ENCODE measurements at regions of chr5 and their contacts with region 1.

Region 1: DNA sequence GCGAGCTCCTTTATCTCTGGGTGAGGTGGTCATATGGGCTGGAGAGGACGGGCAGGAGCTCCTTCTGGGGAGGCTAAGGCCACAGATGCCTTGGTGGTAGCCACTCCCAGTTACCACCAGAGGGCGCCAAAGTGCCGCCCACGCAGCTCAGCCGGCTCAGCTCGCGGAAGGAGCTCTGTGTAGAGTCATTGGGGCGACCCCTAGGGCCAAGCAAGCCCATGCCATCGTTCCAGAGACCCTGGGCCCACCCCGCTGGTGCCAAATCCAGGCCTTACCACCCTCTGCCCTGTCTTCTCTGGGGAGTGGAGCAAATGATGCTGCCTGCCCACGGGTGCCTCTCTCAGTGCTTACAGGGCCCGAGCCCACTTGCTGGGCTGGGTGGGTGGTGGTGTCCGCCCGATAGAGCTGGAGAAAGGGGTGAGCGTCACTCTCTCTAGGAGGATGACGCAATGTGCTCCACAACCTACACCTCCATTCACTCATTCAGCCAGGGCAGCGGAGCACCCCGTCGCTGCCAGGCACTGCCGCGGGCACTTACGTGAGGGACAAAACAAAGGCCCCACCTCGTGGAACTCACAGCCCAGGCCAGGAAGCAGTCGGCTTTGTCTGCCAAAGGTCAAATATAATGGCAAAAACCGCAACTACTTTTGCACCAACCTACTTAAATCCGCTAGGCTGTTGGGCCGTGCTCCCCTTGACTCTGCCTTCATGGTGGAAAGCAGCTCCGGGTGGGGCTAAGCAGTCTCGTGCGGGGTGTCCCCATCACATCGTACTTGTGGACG is 13.8 kb downstream of the TSPAN17 start:
- DNase-seq: peak; percentile 89
- ATAC-seq: peak; percentile 83
- H3K4me3 Mint-ChIP-seq: no peak overlapping the region
- H3K27ac Mint-ChIP-seq: no peak overlapping the region
- H3K4me1 Mint-ChIP-seq: peaks cover 11% of the 10 kb centered on the region
- H3K27me3 Mint-ChIP-seq: no peaks in the 10 kb centered on the region
- CTCF ChIP-seq: peak; percentile 98

Region 2: GRCh38 chr5:176429972-176430371 is 231.1 kb before region 1 on chr5:
- CTCF ChIA-PET with region 1: no interaction called
- POLR2A ChIA-PET with region 1: no interaction called
- DNase-seq: no peak
- ATAC-seq: no peak
- H3K4me3 Mint-ChIP-seq: no peak overlapping the region
- H3K27ac Mint-ChIP-seq: no peak overlapping the region
- H3K4me1 Mint-ChIP-seq: no peaks in the 10 kb centered on the region
- H3K27me3 Mint-ChIP-seq: peaks cover 19% of the 10 kb centered on the region
- CTCF ChIP-seq: no peak

Region 3: GRCh38 chr5:176466245-176466871 is 194.7 kb before region 1 on chr5:
- CTCF ChIA-PET with region 1: no interaction called
- POLR2A ChIA-PET with region 1: no interaction called
- DNase-seq: no peak
- ATAC-seq: no peak
- H3K4me3 Mint-ChIP-seq: no peak overlapping the region
- H3K27ac Mint-ChIP-seq: no peak overlapping the region; the same call in 1 of the 2 replicates
- H3K4me1 Mint-ChIP-seq: peaks cover 2% of the 10 kb centered on the region; the same call in 1 of the 2 replicates
- H3K27me3 Mint-ChIP-seq: no peaks in the 10 kb centered on the region
- CTCF ChIP-seq: no peak

Region 4: GRCh38 chr5:176647030-176647866 is 13.8 kb before region 1 on chr5 and contains the start of gene TSPAN17:
- CTCF ChIA-PET with region 1: interaction called, 112 read pairs
- POLR2A ChIA-PET with region 1: interaction called, 5 read pairs
- DNase-seq: peak; percentile 100
- ATAC-seq: peak; percentile 93
- H3K4me3 Mint-ChIP-seq: peak within 1 kb of the TSS; percentile 81
- H3K27ac Mint-ChIP-seq: peak within 1 kb of the TSS; percentile 90
- H3K4me1 Mint-ChIP-seq: peaks cover 45% of the 10 kb centered on the region
- H3K27me3 Mint-ChIP-seq: no peaks in the 10 kb centered on the region
- CTCF ChIP-seq: no peak
- total RNA-seq, gene TSPAN17: 45.7 to 47.8 TPM (median 46.1 TPM) in 3 replicates

Region 5: GRCh38 chr5:176733406-176734262 is 72.6 kb after region 1 on chr5:
- CTCF ChIA-PET with region 1: interaction called, 54 read pairs
- POLR2A ChIA-PET with region 1: no interaction called
- DNase-seq: peak; percentile 10
- ATAC-seq: no peak
- H3K4me3 Mint-ChIP-seq: no peak overlapping the region
- H3K27ac Mint-ChIP-seq: no peak overlapping the region
- H3K4me1 Mint-ChIP-seq: peaks cover 23% of the 10 kb centered on the region
- H3K27me3 Mint-ChIP-seq: peaks cover 11% of the 10 kb centered on the region
- CTCF ChIP-seq: no peak

Region 6: DNA sequence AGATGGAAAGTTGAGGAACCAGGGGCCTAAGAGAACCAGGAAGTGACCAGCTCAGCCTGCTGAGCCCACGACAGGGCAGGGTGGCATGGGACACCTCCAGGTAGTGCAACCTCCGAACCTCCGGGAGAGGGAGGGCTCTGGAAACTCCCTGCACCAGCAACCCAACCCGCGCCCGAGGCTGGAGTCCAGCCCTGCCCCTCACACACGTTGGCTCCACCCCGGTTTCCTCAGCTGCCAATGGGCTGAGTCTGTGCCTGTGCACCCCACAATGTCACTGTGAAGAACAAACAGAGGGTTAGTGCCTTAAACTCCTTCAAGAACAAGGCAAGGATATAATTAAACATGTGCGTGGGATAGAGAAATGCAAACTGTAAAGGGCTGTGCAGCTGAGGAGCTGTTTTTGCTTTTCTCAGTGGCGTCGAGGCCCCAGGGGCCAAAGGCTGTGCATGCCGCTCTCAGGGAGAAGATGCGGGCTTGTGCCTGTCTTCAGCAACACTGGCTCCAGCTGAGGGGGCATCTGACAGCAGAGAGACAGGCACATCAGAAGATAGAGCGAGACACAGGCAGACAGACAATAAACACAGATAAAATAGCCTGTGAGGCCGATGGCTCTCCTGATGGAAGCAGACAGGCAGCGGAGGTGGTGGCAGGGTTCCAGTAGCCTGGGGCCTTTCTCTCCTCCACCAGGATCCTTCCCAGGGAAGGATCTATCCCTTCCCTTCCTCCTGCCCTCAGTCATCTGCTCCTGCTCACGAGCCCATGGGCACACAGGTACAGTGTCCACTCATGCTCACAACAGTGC is 132.5 kb after region 1 on chr5:
- CTCF ChIA-PET with region 1: interaction called, 22 read pairs
- POLR2A ChIA-PET with region 1: no interaction called
- DNase-seq: peak; percentile 50
- ATAC-seq: peak; percentile 93
- H3K4me3 Mint-ChIP-seq: no peak overlapping the region
- H3K27ac Mint-ChIP-seq: no peak overlapping the region
- H3K4me1 Mint-ChIP-seq: peaks cover 26% of the 10 kb centered on the region
- H3K27me3 Mint-ChIP-seq: no peaks in the 10 kb centered on the region; the same call in 1 of the 2 replicates
- CTCF ChIP-seq: no peak

Region 7: DNA sequence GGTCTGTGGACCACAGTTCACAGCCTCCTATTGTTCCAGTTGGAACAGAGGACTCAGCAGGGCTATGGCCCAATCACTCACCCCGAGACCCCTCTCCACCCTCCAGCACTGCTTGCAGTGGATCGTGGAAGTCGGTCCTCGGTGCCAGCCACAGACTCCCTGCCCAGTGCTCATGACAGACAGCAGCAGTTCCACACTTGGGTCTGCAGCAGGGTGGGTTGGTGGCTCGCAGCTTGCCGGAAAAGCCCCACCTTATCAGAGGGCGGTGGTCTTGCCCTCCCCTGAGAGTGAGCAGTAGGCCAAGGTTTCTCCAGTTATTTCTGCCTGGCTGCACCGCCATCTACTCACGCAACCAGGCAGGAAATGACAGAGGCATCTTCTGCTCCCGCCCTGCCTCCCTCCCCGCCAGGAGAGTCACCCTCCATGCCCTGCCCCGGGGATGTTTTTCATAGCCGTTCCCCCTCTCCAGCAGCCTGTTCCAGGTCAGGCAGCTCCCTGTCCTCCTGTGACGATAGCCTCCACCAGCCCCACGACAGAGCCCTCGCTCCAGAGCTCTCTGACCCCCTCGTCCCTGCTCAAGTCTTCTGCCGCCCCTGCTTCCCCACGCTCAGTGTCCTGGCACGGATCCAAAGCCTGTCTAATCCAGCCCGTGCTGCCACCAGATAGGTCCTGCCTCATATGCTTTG is 183.8 kb after region 1 on chr5:
- CTCF ChIA-PET with region 1: interaction called, 17 read pairs
- POLR2A ChIA-PET with region 1: no interaction called
- DNase-seq: no peak
- ATAC-seq: no peak
- H3K4me3 Mint-ChIP-seq: no peak overlapping the region
- H3K27ac Mint-ChIP-seq: no peak overlapping the region
- H3K4me1 Mint-ChIP-seq: peaks cover 8% of the 10 kb centered on the region
- H3K27me3 Mint-ChIP-seq: peaks cover 6% of the 10 kb centered on the region
- CTCF ChIP-seq: no peak

Region 8: DNA sequence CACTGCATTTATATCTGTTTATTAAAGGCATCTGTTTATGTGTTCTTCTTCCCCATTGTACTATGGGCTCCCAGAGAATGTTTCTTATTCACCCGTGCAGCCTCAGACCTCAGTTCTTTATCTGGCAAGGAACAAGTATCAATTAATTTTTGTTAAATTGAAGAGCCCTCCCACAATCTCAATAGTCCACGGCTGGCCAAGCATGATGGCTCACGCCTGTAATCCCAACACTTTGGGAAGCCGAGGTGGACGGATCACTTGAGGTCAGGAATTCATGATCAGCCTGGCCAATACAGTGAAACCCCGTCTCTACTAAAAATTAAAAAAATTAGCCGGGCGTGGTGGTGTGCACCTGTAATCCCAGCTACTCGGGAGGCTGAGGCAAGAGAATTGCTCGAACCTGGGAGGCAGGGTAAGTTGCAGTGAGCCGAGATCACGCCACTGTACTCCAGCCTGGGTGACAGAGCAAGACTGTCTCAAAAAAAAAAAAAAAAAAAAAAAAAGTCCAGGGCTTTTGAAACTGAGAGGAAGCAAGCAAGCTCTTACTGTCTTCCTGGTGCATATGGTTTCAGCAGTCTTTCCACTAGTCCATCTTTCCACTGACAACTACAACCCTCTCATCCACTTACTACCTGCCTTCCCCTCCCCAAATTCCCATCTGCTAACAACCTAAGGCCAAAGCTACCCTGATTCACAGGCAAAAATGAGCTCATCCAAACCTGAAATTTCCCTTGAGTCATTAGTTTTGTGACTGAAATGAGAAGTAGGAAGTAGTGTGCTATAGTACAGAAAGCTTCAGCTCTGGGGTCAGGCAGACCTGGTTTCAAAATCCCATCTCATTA is 240.4 kb after region 1 on chr5:
- CTCF ChIA-PET with region 1: interaction called, 63 read pairs
- POLR2A ChIA-PET with region 1: interaction called, 3 read pairs
- DNase-seq: no peak
- ATAC-seq: no peak
- H3K4me3 Mint-ChIP-seq: no peak overlapping the region
- H3K27ac Mint-ChIP-seq: peak overlapping the region; percentile 75
- H3K4me1 Mint-ChIP-seq: peaks cover 11% of the 10 kb centered on the region
- H3K27me3 Mint-ChIP-seq: no peaks in the 10 kb centered on the region
- CTCF ChIP-seq: no peak

Region 9: DNA sequence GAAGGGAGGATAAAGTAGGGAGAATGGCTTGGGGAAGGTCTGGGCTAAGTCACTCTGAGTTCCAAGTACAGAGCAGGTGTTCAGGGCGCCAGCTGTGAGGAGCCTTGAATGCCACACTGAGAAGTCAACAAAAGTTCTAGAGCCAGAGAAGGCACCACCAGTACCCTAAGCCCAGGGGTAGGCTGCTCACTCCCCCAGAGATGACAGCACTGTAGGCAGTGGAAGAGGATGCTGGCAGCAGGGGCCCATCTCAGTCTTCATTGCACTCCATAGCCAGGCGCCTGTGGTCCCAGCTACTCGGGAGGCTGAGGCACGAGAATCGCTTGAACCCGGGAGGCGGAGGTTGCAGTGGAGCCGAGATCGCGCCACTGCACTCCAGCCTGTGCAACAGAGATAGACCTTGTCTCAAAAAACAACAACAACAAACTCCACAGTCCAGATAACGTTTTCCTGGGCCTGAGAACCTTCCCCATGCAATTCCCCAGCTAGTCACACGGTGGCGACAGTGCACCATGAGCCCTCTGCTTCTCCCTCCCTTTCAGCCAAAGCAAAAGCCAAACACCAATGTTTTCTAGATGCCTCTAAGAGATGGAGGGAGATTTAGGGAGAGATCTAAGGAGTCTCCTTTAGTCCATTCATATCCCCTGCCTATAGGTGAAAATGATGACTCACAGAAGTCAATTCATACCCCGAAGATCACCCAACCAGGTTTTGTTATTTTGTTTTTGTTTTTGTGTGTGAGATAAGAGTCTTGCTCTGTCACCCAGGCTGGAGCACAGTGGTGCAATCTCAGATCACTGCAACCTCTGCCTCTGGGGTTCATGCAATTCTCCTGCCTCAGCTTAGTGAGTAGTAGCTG is 452.7 kb after region 1 on chr5:
- CTCF ChIA-PET with region 1: interaction called, 32 read pairs
- POLR2A ChIA-PET with region 1: no interaction called
- DNase-seq: peak; percentile 82
- ATAC-seq: peak; percentile 15
- H3K4me3 Mint-ChIP-seq: no peak overlapping the region
- H3K27ac Mint-ChIP-seq: no peak overlapping the region; the same call in 1 of the 2 replicates
- H3K4me1 Mint-ChIP-seq: peaks cover 11% of the 10 kb centered on the region
- H3K27me3 Mint-ChIP-seq: peaks cover 15% of the 10 kb centered on the region
- CTCF ChIP-seq: peak; percentile 93

Measured in WTC11 (cell line).